ENCODE measurements at regions of chr6 and their contacts with region 1.

Region 1: DNA sequence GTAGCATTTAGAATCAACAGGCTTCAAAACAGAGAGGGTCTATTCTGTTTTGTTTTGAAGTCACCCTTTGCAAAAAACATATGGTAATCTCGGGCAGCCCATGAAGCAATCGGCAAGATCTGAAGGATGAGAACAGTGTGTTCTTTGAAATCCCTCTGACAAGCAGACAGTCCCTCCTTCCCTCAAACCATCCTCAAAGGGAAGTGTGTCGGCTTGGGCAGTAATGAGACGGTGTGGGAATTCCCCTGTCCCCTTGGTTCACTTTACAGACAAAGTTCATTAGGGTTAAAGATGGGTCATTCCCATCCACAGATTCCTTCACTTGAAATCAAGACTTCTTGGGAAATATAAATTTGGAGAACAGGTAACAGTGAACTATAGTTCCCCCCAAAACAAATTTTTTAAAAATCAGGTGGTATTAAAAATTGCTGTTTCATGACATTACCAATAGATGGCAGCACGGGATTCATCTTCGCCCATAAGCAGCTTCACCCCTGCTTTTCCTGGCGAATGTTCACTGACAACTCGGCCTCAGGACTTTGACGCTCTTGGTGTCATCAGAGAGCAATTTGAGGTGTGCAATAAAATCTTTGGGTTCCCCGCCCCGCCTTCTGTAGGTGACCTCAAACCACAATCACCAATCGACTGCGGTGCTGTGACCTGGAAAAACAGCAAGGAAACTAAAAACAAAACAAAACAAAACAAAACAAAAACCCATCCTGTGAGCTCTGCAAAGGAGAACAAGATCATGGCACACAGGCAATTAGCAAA is 159.3 kb upstream of the TNFAIP3 start:
- DNase-seq: peak; percentile 61
- H3K4me3 ChIP-seq: no peak overlapping the region
- H3K27ac ChIP-seq: peak overlapping the region in 1 of 2 donors; percentile 18
- H3K4me1 ChIP-seq: no peaks in the 10 kb centered on the region
- H3K27me3 ChIP-seq: no peaks in the 10 kb centered on the region
- CTCF ChIP-seq: peak; percentile 67 to 85 (median 80)
- POLR2A ChIP-seq: no peak

Region 2: DNA sequence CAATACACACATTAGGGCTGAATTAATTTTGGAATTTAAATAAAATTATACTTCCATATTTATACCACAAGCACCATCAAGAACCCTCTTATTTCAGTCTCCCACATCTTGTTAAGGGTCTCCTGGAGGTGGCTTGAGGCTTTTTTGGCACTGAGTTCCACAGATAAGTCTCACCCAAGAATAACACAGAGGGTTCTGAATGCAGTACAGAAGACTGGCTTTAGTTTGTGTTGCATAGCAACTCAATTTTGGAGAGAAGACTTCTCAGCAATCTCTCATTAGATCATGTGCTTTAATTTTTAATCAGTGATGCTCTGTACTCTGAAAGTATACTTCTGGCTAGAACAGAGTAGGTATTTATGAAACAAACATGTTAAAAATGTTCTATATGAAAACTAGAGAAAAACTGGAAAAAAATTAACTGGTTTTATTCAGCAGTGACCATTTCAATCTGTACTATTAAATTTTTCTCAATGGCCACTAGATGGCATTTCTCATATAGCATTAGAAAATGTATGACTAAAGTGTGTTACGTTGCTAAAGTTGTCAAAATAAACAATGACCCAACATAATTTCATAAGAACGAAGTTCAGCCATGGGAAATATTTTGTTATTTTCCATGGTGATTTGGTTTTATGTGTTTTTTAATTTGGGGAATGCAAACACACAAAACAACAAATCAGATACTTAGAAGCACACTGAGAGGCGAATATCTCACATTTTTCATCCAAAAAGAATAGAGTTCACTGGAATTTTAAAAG is 1124.9 kb before region 1 on chr6:
- intact Hi-C with region 1: no loop called
- DNase-seq: no peak
- H3K4me3 ChIP-seq: no peak overlapping the region
- H3K27ac ChIP-seq: peak overlapping the region; percentile 29 to 43
- H3K4me1 ChIP-seq: no peaks in the 10 kb centered on the region
- H3K27me3 ChIP-seq: no peaks in the 10 kb centered on the region
- CTCF ChIP-seq: peak; percentile 39 to 74 (median 64)
- POLR2A ChIP-seq: no peak

Region 3: DNA sequence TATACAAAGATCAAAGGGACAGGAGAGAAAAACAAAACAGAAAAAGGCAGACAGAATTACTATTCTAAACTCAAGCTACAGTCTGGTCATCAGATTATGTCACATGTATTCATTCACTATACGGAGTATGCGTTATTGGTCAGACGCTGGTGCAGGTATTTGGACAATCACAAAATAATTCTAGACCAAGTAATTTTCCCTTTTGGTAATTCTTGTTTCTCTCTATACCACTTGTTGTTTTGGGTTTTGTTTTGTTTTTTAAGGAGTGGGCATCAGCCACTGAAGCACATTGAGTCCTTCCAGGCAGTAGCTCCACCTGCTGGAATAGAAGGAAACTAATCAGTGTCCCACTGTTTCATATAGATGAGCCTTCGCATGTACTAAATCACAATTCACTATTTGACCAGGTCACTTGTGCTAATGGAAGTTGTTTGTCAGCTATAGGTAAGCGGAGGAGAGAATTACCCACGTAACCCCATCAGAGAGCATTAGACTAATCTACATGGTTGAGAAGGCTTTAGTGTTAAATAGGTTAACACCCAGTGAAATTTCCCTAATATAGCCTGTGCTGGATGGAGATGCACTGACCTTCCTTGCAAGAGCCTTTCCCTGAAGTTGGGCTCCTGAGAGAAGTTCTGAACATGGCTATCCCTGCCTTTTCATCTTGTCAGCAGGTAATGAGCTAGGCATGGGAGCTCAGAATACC is 237.2 kb after region 1 on chr6:
- intact Hi-C with region 1: loop called (anchors 1 kb)
- DNase-seq: no peak
- H3K4me3 ChIP-seq: no peak overlapping the region
- H3K27ac ChIP-seq: no peak overlapping the region
- H3K4me1 ChIP-seq: no peaks in the 10 kb centered on the region
- H3K27me3 ChIP-seq: no peaks in the 10 kb centered on the region
- CTCF ChIP-seq: peak; percentile 31 to 78 (median 69)
- POLR2A ChIP-seq: no peak

Region 4: GRCh38 chr6:137975188-137975940 is 267.6 kb after region 1 on chr6:
- intact Hi-C with region 1: loop called (anchors 10 kb)
- DNase-seq: no peak
- H3K4me3 ChIP-seq: no peak overlapping the region
- H3K27ac ChIP-seq: no peak overlapping the region
- H3K4me1 ChIP-seq: no peaks in the 10 kb centered on the region
- H3K27me3 ChIP-seq: no peaks in the 10 kb centered on the region
- CTCF ChIP-seq: peak in 2 of 4 experiments; percentile 46 to 47
- POLR2A ChIP-seq: no peak

Region 5: GRCh38 chr6:138109042-138109997 is 401.5 kb after region 1 on chr6:
- intact Hi-C with region 1: loop called (anchors 5 kb)
- DNase-seq: peak; percentile 73
- H3K4me3 ChIP-seq: no peak overlapping the region
- H3K27ac ChIP-seq: peak overlapping the region; percentile 34 to 99
- H3K4me1 ChIP-seq: no peaks in the 10 kb centered on the region
- H3K27me3 ChIP-seq: no peaks in the 10 kb centered on the region
- CTCF ChIP-seq: peak; percentile 95 to 98 (median 97)
- POLR2A ChIP-seq: no peak